Psoas muscle (tissue), 8 donors: ENCODE measurements at regions of chr5 and their contacts with region 1.

Region 1: DNA sequence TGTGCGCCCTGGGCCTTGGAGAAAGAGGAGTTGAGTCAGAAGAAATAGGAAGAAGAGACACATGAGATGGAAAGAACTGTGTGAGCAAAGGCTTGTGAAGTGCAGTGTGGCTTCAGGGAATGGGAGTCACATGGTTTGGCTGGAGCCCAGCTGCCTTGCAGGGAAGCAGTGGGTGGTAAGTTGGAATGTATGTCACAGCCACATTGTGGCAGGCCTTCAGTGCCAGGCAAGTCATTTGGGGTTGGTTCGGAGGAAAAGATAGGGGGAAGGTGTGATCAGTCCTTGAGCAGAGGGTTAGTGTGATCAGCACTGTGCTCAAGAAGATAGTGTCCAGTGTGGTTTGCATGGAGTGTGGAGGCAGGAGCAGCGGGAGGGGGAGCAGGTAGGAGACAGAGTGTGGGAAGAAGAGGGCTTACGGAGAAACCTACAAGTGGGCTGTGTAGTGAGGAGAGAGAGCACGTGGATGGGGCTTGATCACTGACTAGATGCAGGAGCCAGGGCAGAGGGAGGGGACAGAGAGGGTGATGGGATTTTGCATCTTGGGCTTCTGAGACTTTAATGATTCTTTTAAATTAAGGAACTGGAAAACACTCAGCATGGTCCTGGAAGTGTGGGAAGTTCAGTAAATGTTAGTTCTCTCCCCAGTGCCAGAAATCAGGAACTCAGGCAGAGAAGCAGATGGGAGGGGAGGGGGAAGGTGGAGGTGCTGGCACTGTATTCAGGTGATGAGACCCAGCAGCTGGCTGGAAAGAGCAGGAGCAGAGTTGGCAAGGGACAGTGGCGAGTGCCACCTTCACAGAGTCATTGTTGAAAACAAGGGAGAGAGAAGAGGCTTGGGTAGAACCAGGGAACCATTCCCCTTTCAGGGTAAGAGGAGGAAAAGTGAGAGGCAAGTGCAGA is 46.6 kb downstream of the ARHGAP26 start:
- DNase-seq: peak; percentile 48 to 64
- ATAC-seq: peak; percentile 19 to 66 (median 36)
- H3K4me3 ChIP-seq: no peak overlapping the region
- H3K27ac ChIP-seq: no peak overlapping the region
- H3K4me1 ChIP-seq: peaks cover 55% of the 10 kb centered on the region
- H3K27me3 ChIP-seq: no peaks in the 10 kb centered on the region
- CTCF ChIP-seq: no peak

Region 2: GRCh38 chr5:142769741-142770631 is 46.8 kb before region 1 on chr5 and contains the start of gene ARHGAP26:
- intact Hi-C with region 1: loop called in 1 of 2 experiments (anchors 5 kb)
- DNase-seq: peak; percentile 97 to 98
- ATAC-seq: peak; percentile 98 to 99 (median 99)
- H3K4me3 ChIP-seq: peak within 1 kb of the TSS; percentile 90
- H3K27ac ChIP-seq: peak within 1 kb of the TSS; percentile 80
- H3K4me1 ChIP-seq: peaks cover 16% of the 10 kb centered on the region
- H3K27me3 ChIP-seq: no peaks in the 10 kb centered on the region
- CTCF ChIP-seq: peak; percentile 32
- total RNA-seq, gene ARHGAP26: 12.0 to 28.7 (median 13.1) TPM

Region 3: DNA sequence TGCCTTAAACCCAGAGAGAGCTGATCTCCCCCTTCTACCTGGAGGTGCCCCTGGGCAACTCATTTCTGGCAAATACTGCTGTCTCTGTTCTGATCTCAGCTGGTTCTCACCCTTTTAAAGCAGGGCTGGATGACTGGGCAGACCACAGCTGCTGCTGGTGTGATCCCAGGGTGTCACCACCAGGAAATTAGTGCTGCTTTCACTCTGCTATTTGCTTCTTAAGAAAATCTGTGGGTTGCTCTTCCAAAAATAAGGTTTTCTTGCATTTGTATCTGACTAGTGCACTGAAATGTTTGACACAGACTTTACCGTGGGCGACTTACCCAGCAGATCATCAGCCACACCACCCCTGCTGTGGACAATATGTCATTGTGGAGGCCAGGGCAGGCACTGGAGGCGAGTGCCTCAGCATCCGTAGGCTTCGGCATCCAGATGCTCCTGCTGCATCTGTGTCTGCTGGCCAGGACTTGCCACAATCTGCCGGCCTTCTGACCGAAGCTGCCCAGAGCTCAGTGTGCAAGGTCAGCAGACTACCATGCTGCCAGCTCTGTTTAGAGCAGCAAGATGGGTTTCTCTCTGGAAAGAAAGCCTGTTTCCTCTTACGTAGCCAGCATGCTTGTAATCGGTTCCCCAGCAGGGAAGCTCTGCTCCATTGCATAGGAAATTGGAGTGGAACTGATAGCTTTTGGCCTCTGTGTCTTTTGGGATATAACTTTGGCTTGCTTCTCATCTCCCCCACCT is 33.0 kb before region 1 on chr5:
- intact Hi-C with region 1: loop called in 1 of 2 experiments (anchors 5 kb)
- DNase-seq: peak; percentile 32 to 57
- ATAC-seq: peak in 2 of 4 donors; percentile 44 to 48
- H3K4me3 ChIP-seq: peak overlapping the region; percentile 16
- H3K27ac ChIP-seq: peak overlapping the region; percentile 38
- H3K4me1 ChIP-seq: peaks cover 33% of the 10 kb centered on the region
- H3K27me3 ChIP-seq: no peaks in the 10 kb centered on the region
- CTCF ChIP-seq: no peak

Region 4: DNA sequence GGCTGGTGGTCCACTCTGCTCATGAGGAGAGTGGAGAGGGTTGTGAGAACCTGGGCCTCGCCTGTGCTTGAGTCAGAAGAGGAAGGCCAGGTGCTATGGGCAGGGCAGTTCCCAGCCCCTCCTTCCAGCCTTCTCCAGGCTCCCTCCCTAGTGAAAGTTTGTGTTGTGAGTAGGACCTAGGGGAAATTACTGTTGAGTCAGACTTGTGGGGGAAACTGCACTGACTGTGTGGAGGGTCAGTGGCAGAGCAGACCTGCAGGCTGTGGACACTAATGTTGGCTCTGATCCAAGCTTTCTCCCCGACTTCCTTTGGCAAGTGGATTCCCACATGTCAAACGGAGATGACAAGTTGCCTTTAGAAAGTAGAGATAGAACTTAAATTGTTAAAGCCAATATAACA is 56.0 kb after region 1 on chr5:
- intact Hi-C with region 1: loop called in 1 of 2 experiments (anchors 5 kb)
- DNase-seq: no peak
- ATAC-seq: peak in 3 of 4 donors; percentile 24 to 29 (median 25)
- H3K4me3 ChIP-seq: no peak overlapping the region
- H3K27ac ChIP-seq: no peak overlapping the region
- H3K4me1 ChIP-seq: peaks cover 12% of the 10 kb centered on the region
- H3K27me3 ChIP-seq: no peaks in the 10 kb centered on the region
- CTCF ChIP-seq: no peak

Region 5: GRCh38 chr5:143355720-143356119 is 538.9 kb after region 1 on chr5:
- intact Hi-C with region 1: no loop called
- DNase-seq: peak; percentile 38 to 75
- ATAC-seq: peak; percentile 76 to 92 (median 88)
- H3K4me3 ChIP-seq: peak overlapping the region; percentile 3
- H3K27ac ChIP-seq: peak overlapping the region; percentile 80
- H3K4me1 ChIP-seq: peaks cover 87% of the 10 kb centered on the region
- H3K27me3 ChIP-seq: no peaks in the 10 kb centered on the region
- CTCF ChIP-seq: no peak